ENCODE measurements at regions of chr14 and their contacts with region 1.

Region 1: DNA sequence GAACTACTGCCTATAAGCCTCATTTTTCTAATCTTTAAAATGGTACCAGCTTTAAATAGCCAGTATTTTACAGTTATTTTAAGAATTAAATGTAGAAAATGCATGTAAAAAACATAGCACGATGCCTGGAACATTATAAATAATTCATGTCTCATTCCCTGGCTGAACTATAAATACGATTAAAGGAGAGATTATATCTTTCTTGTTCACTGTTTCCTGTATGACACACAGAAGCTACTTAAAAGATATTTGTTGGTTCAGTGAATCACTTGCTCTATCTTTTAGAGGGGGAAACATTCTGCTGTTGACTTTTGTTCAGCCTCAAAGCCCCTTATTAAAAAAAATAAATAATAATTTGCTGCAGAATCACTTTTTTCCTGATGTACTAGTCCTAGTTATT is 406.9 kb downstream of the LRFN5 start:
- DNase-seq: no peak
- ATAC-seq: no peak

Region 2: DNA sequence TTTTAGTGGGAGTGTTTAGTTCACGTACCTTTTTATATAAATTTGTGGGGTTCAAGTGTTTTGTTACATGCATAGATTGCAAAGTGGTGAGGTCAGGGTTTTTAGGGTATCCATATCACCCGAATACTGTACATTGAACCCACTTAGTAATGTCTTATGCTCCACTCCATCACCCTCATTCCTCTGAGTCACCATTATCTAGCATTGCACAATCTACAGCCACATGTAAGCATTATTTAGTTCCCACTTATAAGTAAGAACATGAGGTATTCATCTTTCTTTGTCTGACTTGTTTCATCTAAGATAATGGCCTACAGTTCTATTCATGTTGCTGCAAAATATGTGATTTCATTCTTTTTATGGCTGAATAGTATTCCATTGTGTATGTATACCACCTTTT is 990.6 kb before region 1 on chr14:
- intact Hi-C with region 1: no loop called
- DNase-seq: no peak
- ATAC-seq: no peak

Region 3: GRCh38 chr14:42078345-42078744 is 64.8 kb after region 1 on chr14:
- intact Hi-C with region 1: loop called (anchors 2 kb)
- DNase-seq: no peak
- ATAC-seq: no peak

Measured in sciatic nerve (tissue), 2 donors.